Stomach (tissue), 19 donors: ENCODE measurements at regions of chr1 and their contacts with region 1.

Region 1: GRCh38 chr1:6199298-6200187 is at the start of gene RPL22:
- DNase-seq: peak; percentile 98 to 100
- H3K4me3 ChIP-seq: peak within 1 kb of the TSS; percentile 87 to 100 (median 98)
- H3K27ac ChIP-seq: peak within 1 kb of the TSS; percentile 78 to 90 (median 88)
- H3K4me1 ChIP-seq: peaks cover 23 to 50% (median 36%) of the 10 kb centered on the region in 4 donors
- H3K27me3 ChIP-seq: no peaks in the 10 kb centered on the region
- CTCF ChIP-seq: peak in 1 of 7 experiments; percentile 40
- EP300 ChIP-seq: no peak
- POLR2A ChIP-seq: peak in 1 of 4 donors; percentile 14
- total RNA-seq, gene RPL22: 103 to 301 (median 166) TPM

Region 2: DNA sequence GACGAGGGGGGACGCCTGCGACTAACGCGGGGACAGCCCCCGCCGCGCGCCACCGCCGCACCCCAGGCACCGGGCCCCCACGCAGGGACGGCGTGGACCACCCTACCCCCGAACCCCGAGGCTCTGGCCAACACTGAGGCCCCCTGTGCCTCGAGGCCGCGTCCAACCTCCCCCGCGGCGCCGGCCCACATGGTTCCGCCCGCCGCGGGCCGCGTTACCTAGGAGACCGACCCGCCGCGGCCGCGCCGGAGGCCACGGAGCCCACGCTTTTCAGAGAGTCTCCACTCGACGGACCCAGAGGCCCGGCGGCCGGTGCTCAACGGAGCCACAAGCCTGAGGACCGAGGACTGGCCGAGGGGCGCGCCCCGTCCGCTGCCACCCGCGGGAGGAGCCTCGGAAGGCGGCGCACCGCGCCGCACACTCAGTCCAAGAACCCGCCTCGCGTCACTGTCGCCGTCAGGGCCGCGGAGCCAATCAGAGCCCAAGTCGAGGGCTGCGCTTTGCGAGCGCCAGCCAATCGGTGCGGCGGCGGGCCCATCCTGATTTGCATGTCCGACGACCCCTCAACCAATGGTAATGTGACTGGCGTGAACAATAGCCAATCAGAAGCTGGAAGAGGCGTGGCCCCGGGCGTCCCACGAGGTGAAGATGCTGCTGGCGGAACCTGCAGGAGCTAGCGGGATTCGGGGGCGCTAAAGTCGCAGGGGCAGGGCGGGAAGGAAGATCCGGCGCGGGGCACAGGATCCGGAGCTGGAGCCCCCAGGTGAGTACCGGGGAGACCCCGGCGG is 207.3 kb before region 1 on chr1 and contains the start of gene NPHP4:
- intact Hi-C with region 1: loop called (anchors 10 kb)
- DNase-seq: peak; percentile 100
- H3K4me3 ChIP-seq: peak within 1 kb of the TSS; percentile 82 to 99 (median 90)
- H3K27ac ChIP-seq: peak within 1 kb of the TSS; percentile 92 to 96 (median 96)
- H3K4me1 ChIP-seq: peaks cover 17 to 40% (median 28%) of the 10 kb centered on the region in 4 donors
- H3K27me3 ChIP-seq: peaks cover 0 to 17% (median 7%) of the 10 kb centered on the region in 3 donors
- CTCF ChIP-seq: no peak
- EP300 ChIP-seq: no peak
- POLR2A ChIP-seq: no peak
- total RNA-seq, gene NPHP4: 5.3 to 29.7 (median 14.6) TPM

Region 3: DNA sequence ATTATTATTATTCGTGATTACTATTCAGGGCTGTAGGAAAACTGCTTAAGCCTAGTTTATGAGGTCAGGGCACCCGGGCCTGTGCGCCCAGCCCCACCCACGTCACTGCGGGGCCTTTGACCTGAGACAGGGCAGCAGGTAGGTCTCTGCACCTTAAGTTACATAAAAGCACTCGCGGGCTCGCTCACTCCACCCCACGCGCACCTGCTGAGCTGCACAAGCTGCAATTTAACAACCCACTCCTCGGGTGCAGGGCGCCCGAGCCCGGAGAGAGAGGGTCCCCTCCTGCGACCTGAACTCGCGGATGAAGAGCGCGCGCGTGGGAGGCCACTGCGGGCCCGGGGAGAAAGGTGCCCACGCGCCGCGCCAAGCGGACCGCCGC is 35.7 kb after region 1 on chr1:
- intact Hi-C with region 1: no loop called
- DNase-seq: no peak
- H3K4me3 ChIP-seq: peak overlapping the region; percentile 83 to 89 (median 84)
- H3K27ac ChIP-seq: peak overlapping the region in 4 of 5 donors; percentile 37 to 87 (median 81)
- H3K4me1 ChIP-seq: peaks cover 11 to 26% (median 17%) of the 10 kb centered on the region in 4 donors
- H3K27me3 ChIP-seq: peaks cover 0 to 27% (median 9%) of the 10 kb centered on the region in 3 donors
- CTCF ChIP-seq: no peak
- EP300 ChIP-seq: no peak
- POLR2A ChIP-seq: no peak